H1 (cell line): ENCODE measurements at regions of chr18 and their contacts with region 1.

Region 1: DNA sequence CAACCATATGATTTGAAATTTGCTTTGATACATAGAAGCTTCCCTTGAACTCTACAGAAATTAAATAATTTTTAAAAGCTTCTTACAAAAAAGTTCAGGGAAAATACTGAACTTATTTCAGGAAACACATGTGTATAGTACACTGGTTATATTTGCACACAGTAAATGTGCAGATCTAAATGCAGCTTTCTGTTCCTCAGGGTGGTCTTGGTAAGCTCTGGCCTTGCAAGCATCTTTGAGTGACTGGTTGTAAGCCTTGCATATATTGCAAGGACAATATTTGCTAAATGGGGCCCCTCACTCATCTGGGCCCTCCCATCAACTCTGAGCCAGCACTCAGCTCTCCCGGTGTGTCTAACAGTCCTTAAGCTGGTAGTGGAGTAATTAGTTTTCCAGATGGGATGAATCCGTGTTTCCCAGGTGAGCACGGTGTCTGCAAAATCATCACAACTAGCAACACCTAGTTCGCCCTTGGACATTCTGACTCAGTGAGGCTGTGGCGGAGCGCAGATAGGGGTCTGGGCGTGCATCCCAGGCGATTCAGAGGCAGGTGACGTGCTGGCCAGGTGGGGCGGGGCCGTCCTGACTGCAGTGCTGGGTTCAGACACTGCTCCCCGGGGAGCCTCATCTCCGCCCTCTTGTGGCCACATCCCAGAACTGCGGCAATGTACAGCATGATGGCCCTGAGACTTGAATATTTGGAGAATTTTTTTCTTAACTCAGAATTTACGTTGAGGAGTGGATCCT is 149.6 kb downstream of the MBP start:
- DNase-seq: peak; percentile 87 to 98
- H3K4me3 ChIP-seq: no peak overlapping the region
- H3K27ac ChIP-seq: no peak overlapping the region
- H3K4me1 ChIP-seq: peaks cover 0 to 20% (median 9%) of the 10 kb centered on the region in 4 experiments
- H3K27me3 ChIP-seq: no peaks in the 10 kb centered on the region
- CTCF ChIP-seq: peak in 2 of 3 experiments; percentile 94 to 96; a peak in 3 of 4 replicates
- EP300 ChIP-seq: no peak
- POLR2A ChIP-seq: no peak
- RAD21 ChIP-seq: peak; percentile 77 to 84

Region 2: DNA sequence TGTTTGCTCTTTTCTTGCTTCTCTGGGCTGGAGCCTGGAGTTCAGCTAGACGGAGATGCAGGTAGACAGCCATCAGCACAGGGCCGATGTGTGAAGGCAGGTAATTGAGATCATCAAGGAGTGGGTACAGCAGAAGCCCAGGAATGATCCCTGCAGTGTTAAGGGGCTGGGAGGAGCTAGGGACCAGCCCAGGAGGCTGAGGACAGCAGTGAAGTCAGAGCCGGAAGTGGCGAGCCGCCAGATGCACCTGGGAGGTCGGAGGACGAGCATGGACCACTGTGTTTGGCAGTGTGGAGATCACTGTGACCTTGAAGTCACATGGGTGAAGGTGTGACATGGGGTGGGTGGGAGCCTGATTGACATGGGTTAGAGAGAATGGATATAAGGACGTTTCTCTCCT is 166.9 kb before region 1 on chr18:
- CTCF ChIA-PET with region 1: no interaction called
- POLR2A ChIA-PET with region 1: no interaction called
- DNase-seq: no peak
- H3K4me3 ChIP-seq: no peak overlapping the region
- H3K27ac ChIP-seq: no peak overlapping the region
- H3K4me1 ChIP-seq: no peaks in the 10 kb centered on the region
- H3K27me3 ChIP-seq: no peaks in the 10 kb centered on the region
- CTCF ChIP-seq: no peak
- EP300 ChIP-seq: no peak
- POLR2A ChIP-seq: no peak
- RAD21 ChIP-seq: no peak

Region 3: GRCh38 chr18:76922107-76922506 is 60.9 kb before region 1 on chr18:
- CTCF ChIA-PET with region 1: interaction called, 88 read pairs
- POLR2A ChIA-PET with region 1: no interaction called
- DNase-seq: peak in 1 of 2 experiments; percentile 25
- H3K4me3 ChIP-seq: no peak overlapping the region
- H3K27ac ChIP-seq: no peak overlapping the region
- H3K4me1 ChIP-seq: no peaks in the 10 kb centered on the region
- H3K27me3 ChIP-seq: no peaks in the 10 kb centered on the region
- CTCF ChIP-seq: peak; percentile 84 to 88 (median 86)
- EP300 ChIP-seq: no peak
- POLR2A ChIP-seq: no peak
- RAD21 ChIP-seq: peak; percentile 84 to 85

Region 4: GRCh38 chr18:76958692-76959341 is 24.2 kb before region 1 on chr18:
- CTCF ChIA-PET with region 1: interaction called, 188 read pairs
- POLR2A ChIA-PET with region 1: no interaction called
- DNase-seq: no peak
- H3K4me3 ChIP-seq: no peak overlapping the region
- H3K27ac ChIP-seq: no peak overlapping the region
- H3K4me1 ChIP-seq: 0 out of 7 replicates have a peak, but pooled peaks cover 0 to 2% (median 0%) of the 10 kb centered on the region in 4 experiments
- H3K27me3 ChIP-seq: no peaks in the 10 kb centered on the region
- CTCF ChIP-seq: no peak
- EP300 ChIP-seq: no peak
- POLR2A ChIP-seq: no peak
- RAD21 ChIP-seq: no peak

Region 5: DNA sequence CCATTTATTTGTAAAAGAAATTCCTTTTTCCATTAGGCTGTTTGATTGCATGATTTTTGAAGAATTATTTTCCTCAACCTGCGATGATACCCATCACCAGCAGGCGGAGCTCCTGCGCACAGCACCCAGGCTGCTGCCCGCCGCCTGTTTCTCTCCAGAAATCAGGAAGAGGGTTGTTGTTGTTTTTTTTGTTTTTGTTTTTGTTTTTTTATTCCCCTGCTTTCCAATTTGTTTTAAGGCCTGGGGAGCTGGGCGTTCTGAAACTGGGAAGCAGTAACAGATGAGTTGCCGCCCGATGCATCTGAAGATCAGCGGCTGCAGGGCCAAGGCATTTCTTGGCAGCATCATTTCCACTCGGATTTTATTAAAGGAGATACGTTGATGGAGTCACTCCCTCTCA is 17.5 kb after region 1 on chr18:
- CTCF ChIA-PET with region 1: interaction called, 38 read pairs
- POLR2A ChIA-PET with region 1: no interaction called
- DNase-seq: peak in 1 of 2 experiments; percentile 81
- H3K4me3 ChIP-seq: no peak overlapping the region
- H3K27ac ChIP-seq: no peak overlapping the region
- H3K4me1 ChIP-seq: no peaks in the 10 kb centered on the region
- H3K27me3 ChIP-seq: no peaks in the 10 kb centered on the region; a peak in 1 of 7 replicates
- CTCF ChIP-seq: peak; percentile 86 to 89 (median 86)
- EP300 ChIP-seq: no peak
- POLR2A ChIP-seq: no peak
- RAD21 ChIP-seq: peak; percentile 83 to 87

Region 6: GRCh38 chr18:77061946-77062517 is 79.0 kb after region 1 on chr18:
- CTCF ChIA-PET with region 1: interaction called, 26 read pairs
- POLR2A ChIA-PET with region 1: no interaction called
- DNase-seq: no peak
- H3K4me3 ChIP-seq: no peak overlapping the region
- H3K27ac ChIP-seq: no peak overlapping the region
- H3K4me1 ChIP-seq: peaks cover 1 to 11% (median 6%) of the 10 kb centered on the region in 4 experiments; a peak in 6 of 7 replicates
- H3K27me3 ChIP-seq: no peaks in the 10 kb centered on the region
- CTCF ChIP-seq: peak; percentile 41 to 71 (median 54)
- EP300 ChIP-seq: no peak
- POLR2A ChIP-seq: no peak
- RAD21 ChIP-seq: peak; percentile 68 to 77

Region 7: DNA sequence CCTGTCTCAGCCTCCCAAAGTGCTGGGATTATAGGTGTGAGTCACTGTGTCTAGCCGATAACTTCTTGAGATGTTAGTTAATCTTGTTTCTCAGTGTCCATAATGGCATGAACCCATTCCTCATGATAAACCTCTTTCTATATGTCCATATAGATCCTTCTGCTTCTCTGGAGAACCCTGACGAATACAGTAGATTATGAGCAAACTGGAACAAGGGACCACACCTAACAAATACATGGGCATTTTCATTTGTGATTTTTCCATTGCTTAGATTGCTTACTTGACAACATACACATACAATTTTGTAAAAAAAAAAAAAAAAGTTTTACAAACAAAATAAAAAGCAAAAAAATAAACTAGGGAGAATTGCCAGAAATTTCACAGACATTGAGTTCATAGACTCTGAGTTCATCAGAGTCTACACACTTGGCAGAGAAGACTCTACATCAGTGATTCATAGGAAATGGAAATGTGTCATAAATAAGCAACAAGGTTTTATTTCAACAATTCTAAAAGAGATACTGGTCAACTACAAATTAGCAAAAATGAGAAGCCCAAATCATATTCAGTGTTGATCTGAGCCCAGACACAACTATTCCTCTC is 363.3 kb after region 1 on chr18:
- CTCF ChIA-PET with region 1: no interaction called
- POLR2A ChIA-PET with region 1: no interaction called
- DNase-seq: no peak
- H3K4me3 ChIP-seq: no peak overlapping the region
- H3K27ac ChIP-seq: no peak overlapping the region
- H3K4me1 ChIP-seq: no peaks in the 10 kb centered on the region; a peak in 1 of 7 replicates
- H3K27me3 ChIP-seq: no peaks in the 10 kb centered on the region
- CTCF ChIP-seq: no peak
- EP300 ChIP-seq: no peak
- POLR2A ChIP-seq: no peak
- RAD21 ChIP-seq: no peak